ENCODE measurements at regions of chr1 and their contacts with region 1.

Region 1: DNA sequence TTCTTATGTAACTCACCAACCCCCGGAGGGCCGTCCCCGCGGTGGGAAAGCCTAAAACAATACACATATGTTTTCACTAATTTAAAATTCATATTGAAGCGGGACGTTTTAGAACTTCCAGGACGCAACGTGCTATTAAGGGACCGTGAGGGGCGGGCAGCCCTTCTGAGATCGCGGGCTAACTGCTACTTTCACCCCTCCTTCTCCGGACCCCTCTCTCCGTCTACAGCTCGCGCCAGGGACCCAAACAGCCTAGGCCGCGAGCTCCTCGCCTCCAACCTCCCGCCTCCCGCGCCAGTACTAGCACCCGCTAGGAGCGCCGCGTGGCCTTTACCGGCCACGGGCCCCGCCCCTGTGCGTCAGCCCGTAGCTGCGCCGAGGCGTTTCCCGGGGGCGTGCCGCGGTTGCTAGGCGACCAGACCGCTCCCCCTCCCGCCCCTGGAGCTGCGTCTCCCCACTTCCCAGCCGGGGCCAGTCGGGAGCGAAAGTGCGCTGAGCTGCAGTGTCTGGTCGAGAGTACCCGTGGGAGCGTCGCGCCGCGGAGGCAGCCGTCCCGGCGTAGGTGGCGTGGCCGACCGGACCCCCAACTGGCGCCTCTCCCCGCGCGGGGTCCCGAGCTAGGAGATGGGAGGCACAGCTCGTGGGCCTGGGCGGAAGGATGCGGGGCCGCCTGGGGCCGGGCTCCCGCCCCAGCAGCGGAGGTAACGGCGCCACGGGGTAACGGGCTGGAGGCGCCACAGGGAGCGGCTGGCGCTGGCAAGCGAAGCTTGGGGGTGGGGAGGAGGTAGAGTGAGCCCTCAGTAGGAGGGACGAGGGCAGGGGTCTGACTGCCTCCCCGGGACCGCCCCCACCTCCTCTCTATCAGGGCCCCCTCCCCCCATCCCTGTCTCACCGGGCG is at the start of gene DYRK3:
- DNase-seq: peak; percentile 85 to 99 (median 95)

Region 2: DNA sequence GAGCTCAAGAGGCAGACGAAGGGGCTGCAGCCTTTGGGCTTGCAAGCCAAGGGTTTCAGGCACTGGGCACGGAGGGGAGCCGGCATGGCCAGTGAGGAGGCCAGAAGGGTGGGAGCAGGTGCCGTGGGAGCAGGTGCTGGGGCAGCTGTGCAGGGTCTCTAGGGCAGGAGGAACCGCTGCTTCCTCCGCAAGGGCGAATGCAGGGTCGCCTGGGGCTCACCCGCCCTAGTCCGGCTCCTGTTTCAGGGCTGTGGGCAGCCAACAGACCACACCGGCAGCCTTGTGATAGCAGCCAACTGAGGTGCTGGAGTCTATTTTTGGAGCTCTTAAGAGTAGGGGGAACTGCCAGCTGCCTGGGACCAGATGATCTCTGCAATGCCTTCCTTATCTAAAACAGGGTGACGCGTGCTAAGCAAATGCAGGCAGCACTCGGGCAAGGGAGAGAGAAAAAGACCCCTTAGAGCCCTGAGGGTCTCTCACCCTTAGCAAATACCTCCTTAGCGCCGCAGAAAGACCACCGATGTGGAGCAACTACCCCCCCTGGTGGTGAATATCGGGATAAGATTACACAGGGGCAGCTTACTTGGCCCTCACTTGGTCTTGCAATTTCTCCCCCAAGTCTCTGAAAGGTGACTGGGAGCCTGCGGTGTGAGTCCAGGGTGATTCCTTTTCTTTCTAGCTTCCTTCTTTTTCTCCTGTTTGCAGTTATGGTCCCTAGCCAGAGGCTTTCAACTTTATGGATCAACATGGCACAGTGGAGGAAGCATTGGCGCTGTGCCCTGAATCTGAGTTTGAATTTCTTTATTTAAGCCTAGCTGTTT is 28.7 kb after region 1 on chr1:
- intact Hi-C with region 1: loop called (anchors 1 kb)
- DNase-seq: peak in 6 of 10 donors; percentile 54 to 87 (median 63)

Region 3: GRCh38 chr1:206912445-206913095 is 277.2 kb after region 1 on chr1:
- intact Hi-C with region 1: loop called (anchors 2 kb)
- DNase-seq: peak in 8 of 10 donors; percentile 60 to 93 (median 74)

Region 4: DNA sequence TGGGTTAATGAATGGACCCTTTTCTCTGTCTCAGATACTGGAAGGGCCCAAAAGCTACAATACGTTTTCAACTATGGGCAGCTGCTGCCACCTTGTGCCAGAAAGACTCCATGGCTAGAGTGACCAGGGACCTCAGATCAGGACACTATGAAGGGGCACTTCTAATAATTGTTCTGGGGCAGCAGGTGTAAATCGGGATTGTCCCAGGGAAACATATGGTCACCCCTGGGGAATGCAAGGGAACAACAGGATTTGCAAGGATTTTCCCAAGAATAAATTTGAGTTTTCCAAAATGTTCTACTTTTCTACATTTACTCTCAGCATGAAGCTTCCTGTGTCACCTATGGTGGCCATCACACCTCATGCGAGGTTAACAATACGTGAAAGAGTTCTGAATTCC is 346.9 kb after region 1 on chr1:
- intact Hi-C with region 1: loop called (anchors 2 kb)
- DNase-seq: peak in 8 of 10 donors; percentile 16 to 93 (median 66)

Region 5: DNA sequence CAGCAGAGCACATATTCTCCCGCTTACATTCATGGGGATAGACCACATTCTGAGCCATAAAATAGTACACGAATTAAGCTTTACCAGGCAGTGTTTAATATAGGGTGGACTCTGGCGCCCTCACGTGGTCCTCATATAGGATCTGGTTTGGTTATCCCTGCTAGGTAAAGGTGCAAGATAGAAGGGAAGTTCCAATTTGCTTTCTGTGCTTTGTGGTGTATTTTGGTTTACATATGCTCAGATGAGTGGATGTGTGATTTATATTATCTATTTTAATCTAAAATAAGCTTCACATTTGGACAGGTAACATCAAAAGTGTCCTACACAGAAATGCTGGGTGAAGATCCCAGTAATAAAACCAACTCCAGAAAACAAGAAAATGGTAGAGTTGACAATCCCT is 864.2 kb after region 1 on chr1:
- intact Hi-C with region 1: loop called (anchors 5 kb)
- DNase-seq: peak; percentile 39 to 96 (median 72)